ENCODE measurements at regions of chr2 and their contacts with region 1.

Region 1: DNA sequence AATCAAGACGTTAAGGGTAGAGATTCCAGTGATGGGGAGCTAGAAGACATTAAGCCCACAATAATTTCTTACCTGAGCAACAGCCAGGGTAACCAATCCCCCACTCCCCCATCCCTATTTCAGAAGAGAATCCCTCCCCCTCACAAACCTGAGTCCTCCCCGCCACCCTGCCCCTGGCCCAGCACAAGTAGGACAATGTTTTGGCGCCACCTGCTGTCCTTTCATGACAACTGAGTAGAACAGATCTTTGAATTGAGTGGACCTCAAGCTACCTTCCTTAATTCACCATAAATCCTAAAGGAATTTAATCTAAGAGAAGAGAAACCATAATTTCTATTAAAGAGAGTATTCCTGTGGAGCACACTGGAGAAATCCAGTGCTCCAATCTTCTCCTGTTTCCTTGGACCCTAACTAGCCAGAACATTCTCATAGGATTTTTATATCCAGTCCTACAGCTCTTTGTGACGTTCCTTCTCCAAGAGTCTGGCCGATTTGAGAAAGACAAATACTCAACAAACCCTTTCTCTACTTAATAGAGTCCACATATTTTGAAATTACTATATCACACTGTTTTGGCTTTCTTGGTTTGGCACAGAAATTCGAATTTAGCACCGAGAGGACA is 41.1 kb downstream of the NHEJ1 start:
- DNase-seq: peak; percentile 90
- H3K4me3 ChIP-seq: no peak overlapping the region
- H3K27ac ChIP-seq: no peak overlapping the region
- H3K4me1 ChIP-seq: peaks cover 18% of the 10 kb centered on the region
- H3K27me3 ChIP-seq: no peaks in the 10 kb centered on the region
- CTCF ChIP-seq: peak; percentile 68

Region 2: GRCh38 chr2:219073413-219074129 is 46.0 kb before region 1 on chr2:
- intact Hi-C with region 1: loop called (anchors 5 kb)
- DNase-seq: peak; percentile 79
- H3K4me3 ChIP-seq: no peak overlapping the region
- H3K27ac ChIP-seq: peak overlapping the region; percentile 47
- H3K4me1 ChIP-seq: peaks cover 12% of the 10 kb centered on the region
- H3K27me3 ChIP-seq: no peaks in the 10 kb centered on the region
- CTCF ChIP-seq: peak; percentile 59